ENCODE measurements at regions of chr3 and their contacts with region 1.

Region 1: DNA sequence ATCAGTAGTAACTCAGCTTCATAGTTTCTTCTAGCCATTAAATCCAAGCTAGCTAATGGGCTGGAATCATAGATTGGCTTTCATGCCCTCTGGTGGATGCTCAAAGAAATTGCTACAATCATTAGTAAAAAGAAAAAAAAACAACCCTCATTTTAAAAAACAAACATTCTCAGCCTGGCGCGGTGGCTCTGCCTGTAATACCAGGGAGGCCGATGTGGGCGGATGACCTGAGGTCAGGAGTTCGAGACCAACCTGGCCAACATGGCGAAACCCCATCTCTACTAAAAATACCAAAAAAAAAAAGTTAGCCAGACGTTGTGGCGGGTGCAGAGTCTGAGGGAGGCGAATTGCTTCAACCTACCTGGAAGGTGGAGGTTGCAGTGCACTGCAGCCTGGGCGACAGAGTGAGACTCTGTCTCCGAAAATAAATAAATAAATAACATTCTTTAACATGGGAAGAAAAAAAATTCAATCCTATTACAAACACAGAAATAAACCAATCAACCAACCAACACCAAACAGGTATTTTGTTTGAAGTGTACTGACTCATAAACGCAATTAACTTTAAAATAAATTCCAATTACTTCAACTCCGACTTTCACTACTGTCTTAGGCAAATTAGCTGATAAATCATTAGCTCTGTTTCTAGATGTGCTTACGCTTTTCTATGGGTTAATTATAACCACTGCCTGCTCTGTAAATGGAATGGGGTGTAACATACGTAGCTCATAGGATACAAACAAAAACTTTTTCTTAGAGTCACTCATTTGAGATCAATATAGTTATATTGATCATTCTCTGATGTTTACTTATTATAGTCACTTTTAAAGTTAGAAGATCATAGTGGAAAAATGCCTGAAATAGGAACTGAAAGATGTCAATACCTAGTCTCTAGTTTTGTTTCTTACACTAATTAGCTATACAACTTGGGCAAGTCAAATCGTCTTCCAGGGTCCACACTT is 24.9 kb downstream of the TMEM207 start:
- DNase-seq: peak; percentile 73
- H3K4me3 ChIP-seq: no peak overlapping the region
- H3K27ac ChIP-seq: no peak overlapping the region
- H3K4me1 ChIP-seq: peaks cover 5% of the 10 kb centered on the region
- H3K27me3 ChIP-seq: no peaks in the 10 kb centered on the region
- CTCF ChIP-seq: peak; percentile 44 to 64

Region 2: GRCh38 chr3:189961525-189962161 is 463.1 kb before region 1 on chr3:
- CTCF ChIA-PET with region 1: no interaction called
- dilution Hi-C with region 1: no loop called
- in situ Hi-C with region 1: loop called (anchors 25 kb)
- intact Hi-C with region 1: loop called (anchors 2 kb)
- DNase-seq: peak; percentile 82
- H3K4me3 ChIP-seq: no peak overlapping the region
- H3K27ac ChIP-seq: peak overlapping the region; percentile 2
- H3K4me1 ChIP-seq: peaks cover 18% of the 10 kb centered on the region
- H3K27me3 ChIP-seq: no peaks in the 10 kb centered on the region
- CTCF ChIP-seq: peak; percentile 90 to 97

Region 3: GRCh38 chr3:189967254-189967865 is 457.4 kb before region 1 on chr3:
- CTCF ChIA-PET with region 1: no interaction called
- dilution Hi-C with region 1: no loop called
- in situ Hi-C with region 1: loop called (anchors 25 kb)
- intact Hi-C with region 1: loop called (anchors 2 kb)
- DNase-seq: peak; percentile 41
- H3K4me3 ChIP-seq: no peak overlapping the region
- H3K27ac ChIP-seq: no peak overlapping the region
- H3K4me1 ChIP-seq: peaks cover 6% of the 10 kb centered on the region
- H3K27me3 ChIP-seq: no peaks in the 10 kb centered on the region
- CTCF ChIP-seq: peak; percentile 69 to 90

Region 4: GRCh38 chr3:190224863-190225692 is 199.7 kb before region 1 on chr3:
- CTCF ChIA-PET with region 1: no interaction called
- dilution Hi-C with region 1: no loop called
- in situ Hi-C with region 1: loop called in 1 of 2 experiments (anchors 25 kb)
- intact Hi-C with region 1: loop called (anchors 1 kb)
- DNase-seq: peak; percentile 48
- H3K4me3 ChIP-seq: no peak overlapping the region
- H3K27ac ChIP-seq: no peak overlapping the region
- H3K4me1 ChIP-seq: peaks cover 5% of the 10 kb centered on the region
- H3K27me3 ChIP-seq: no peaks in the 10 kb centered on the region
- CTCF ChIP-seq: peak; percentile 53 to 59

Region 5: DNA sequence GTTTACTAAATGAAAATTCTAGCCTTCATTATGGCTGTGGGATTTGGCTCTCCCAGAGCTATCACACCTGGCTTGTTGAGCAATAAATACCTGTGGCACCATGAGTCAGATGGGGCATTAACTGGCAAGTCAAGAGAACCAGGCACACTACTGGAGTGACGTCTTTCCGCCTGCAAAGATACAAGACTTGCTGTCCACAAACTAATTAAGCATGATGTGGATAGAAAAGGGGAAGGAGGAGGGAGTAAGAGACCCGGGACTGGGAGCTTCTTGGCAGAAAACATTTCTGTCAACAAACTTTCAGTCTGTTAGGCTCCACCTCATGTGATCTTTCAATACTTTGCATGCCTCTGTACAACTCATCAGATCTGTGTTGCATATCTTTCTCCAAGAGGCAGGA is 159.0 kb before region 1 on chr3:
- CTCF ChIA-PET with region 1: no interaction called
- dilution Hi-C with region 1: no loop called
- in situ Hi-C with region 1: no loop called
- intact Hi-C with region 1: no loop called
- DNase-seq: peak; percentile 100
- H3K4me3 ChIP-seq: no peak overlapping the region
- H3K27ac ChIP-seq: peak overlapping the region; percentile 75
- H3K4me1 ChIP-seq: peaks cover 31% of the 10 kb centered on the region
- H3K27me3 ChIP-seq: no peaks in the 10 kb centered on the region
- CTCF ChIP-seq: no peak

Region 6: GRCh38 chr3:190339130-190339529 is 85.6 kb before region 1 on chr3:
- CTCF ChIA-PET with region 1: interaction called, 4 read pairs
- dilution Hi-C with region 1: no loop called
- in situ Hi-C with region 1: no loop called
- intact Hi-C with region 1: loop called (anchors 5 kb)
- DNase-seq: peak; percentile 78
- H3K4me3 ChIP-seq: no peak overlapping the region
- H3K27ac ChIP-seq: peak overlapping the region; percentile 77
- H3K4me1 ChIP-seq: peaks cover 33% of the 10 kb centered on the region
- H3K27me3 ChIP-seq: no peaks in the 10 kb centered on the region
- CTCF ChIP-seq: peak; percentile 26 to 43

Measured in mammary epithelial cell (primary cell).